ENCODE measurements at regions of chr13 and their contacts with region 1.

Region 1: GRCh38 chr13:21458813-21459701 is at the start of gene ZDHHC20:
- DNase-seq: peak; percentile 77 to 96 (median 90)
- ATAC-seq: peak; percentile 93
- H3K4me3 ChIP-seq: peak within 1 kb of the TSS; percentile 69 to 78
- H3K4me3 Mint-ChIP-seq: peak within 1 kb of the TSS; percentile 95
- H3K27ac ChIP-seq: peak within 1 kb of the TSS; percentile 80 to 89
- H3K27ac Mint-ChIP-seq: peak within 1 kb of the TSS; percentile 96
- H3K4me1 ChIP-seq: peaks cover 15% of the 10 kb centered on the region
- H3K4me1 Mint-ChIP-seq: peaks cover 45% of the 10 kb centered on the region
- H3K27me3 ChIP-seq: no peaks in the 10 kb centered on the region
- H3K27me3 Mint-ChIP-seq: no peaks in the 10 kb centered on the region
- CTCF ChIP-seq: no peak
- total RNA-seq, gene ZDHHC20: 81.0 to 81.1 TPM

Region 2: DNA sequence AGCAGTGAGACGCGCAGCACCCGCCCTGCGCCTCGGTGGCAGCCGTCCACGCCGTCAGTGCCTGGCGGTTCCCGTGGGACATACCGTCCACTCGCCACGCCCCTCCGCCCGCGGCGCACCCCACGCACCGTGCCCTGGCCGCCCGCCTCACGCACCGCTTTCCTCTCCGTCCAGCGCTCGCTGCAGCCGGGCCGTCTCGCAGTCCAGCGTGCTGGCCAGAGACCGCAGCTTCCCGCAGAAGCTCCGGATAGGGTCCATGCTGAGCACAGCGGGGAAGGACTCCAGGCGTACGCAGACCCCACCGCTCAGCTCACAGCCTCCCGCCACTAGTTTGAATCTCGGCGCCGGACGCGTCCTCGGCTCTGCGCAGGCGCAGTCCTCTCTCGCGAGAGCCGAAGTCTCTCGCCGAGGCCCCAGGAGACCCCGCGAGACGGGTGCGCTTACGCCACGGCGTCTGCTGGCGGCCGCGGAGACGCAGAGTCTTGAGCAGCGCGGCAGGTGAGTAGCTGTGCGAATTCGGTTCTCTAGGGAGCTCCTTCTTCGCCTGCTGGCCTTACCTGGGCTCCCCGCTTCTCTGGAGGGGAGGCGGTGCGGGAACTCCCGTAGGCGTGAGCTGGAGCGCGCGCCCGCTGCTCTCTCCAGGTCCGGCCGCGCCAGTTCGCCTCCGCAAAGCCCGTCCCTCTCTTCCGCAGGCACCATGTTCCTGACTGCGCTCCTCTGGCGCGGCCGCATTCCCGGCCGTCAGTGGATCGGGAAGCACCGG is 282.7 kb before region 1 on chr13 and contains the starts of genes MRPL57 and SKA3:
- CTCF ChIA-PET with region 1: no interaction called
- POLR2A ChIA-PET with region 1: interaction called, 6 read pairs
- intact Hi-C with region 1: loop called (anchors 1 kb)
- DNase-seq: peak; percentile 86 to 97 (median 93)
- ATAC-seq: peak; percentile 97
- H3K4me3 ChIP-seq: peak within 1 kb of the TSS; percentile 83 to 93
- H3K4me3 Mint-ChIP-seq: peak within 1 kb of the TSS; percentile 97
- H3K27ac ChIP-seq: peak within 1 kb of the TSS; percentile 80 to 92
- H3K27ac Mint-ChIP-seq: peak within 1 kb of the TSS; percentile 96
- H3K4me1 ChIP-seq: peaks cover 18% of the 10 kb centered on the region
- H3K4me1 Mint-ChIP-seq: peaks cover 26% of the 10 kb centered on the region
- H3K27me3 ChIP-seq: no peaks in the 10 kb centered on the region
- H3K27me3 Mint-ChIP-seq: no peaks in the 10 kb centered on the region
- CTCF ChIP-seq: no peak
- total RNA-seq, gene MRPL57: 9.8 to 11.1 TPM
- total RNA-seq, gene SKA3: 0.36 to 0.49 TPM

Region 3: GRCh38 chr13:21402586-21403228 is 56.4 kb before region 1 on chr13:
- CTCF ChIA-PET with region 1: interaction called, 3 read pairs
- POLR2A ChIA-PET with region 1: no interaction called
- intact Hi-C with region 1: loop called (anchors 2 to 5 kb)
- DNase-seq: no peak
- ATAC-seq: no peak
- H3K4me3 ChIP-seq: no peak overlapping the region
- H3K4me3 Mint-ChIP-seq: no peak overlapping the region
- H3K27ac ChIP-seq: no peak overlapping the region
- H3K27ac Mint-ChIP-seq: no peak overlapping the region
- H3K4me1 ChIP-seq: peaks cover 19% of the 10 kb centered on the region
- H3K4me1 Mint-ChIP-seq: peaks cover 36% of the 10 kb centered on the region
- H3K27me3 ChIP-seq: no peaks in the 10 kb centered on the region
- H3K27me3 Mint-ChIP-seq: no peaks in the 10 kb centered on the region
- CTCF ChIP-seq: no peak

Measured in CD8-positive, alpha-beta T cell (primary cell).